Heart right ventricle (tissue), 16 donors: ENCODE measurements at regions of chr10 and their contacts with region 1.

Region 1: GRCh38 chr10:71974489-71975021 is 10.4 kb downstream of the CHST3 start:
- DNase-seq: no peak
- ATAC-seq: peak in 5 of 8 donors; percentile 1 to 51 (median 16)
- H3K4me3 ChIP-seq: no peak overlapping the region
- H3K27ac ChIP-seq: peak overlapping the region; percentile 7 to 92 (median 77)
- H3K4me1 ChIP-seq: peaks cover 42 to 100% (median 93%) of the 10 kb centered on the region in 9 donors
- H3K27me3 ChIP-seq: no peaks in the 10 kb centered on the region
- CTCF ChIP-seq: no peak

Region 2: GRCh38 chr10:72016608-72017312 is 42.2 kb after region 1 on chr10:
- intact Hi-C with region 1: loop called in 2 of 10 experiments (anchors 5 kb)
- DNase-seq: peak; percentile 31 to 74
- ATAC-seq: peak; percentile 28 to 58 (median 53)
- H3K4me3 ChIP-seq: no peak overlapping the region
- H3K27ac ChIP-seq: peak overlapping the region; percentile 56 to 84 (median 78)
- H3K4me1 ChIP-seq: peaks cover 31 to 76% (median 49%) of the 10 kb centered on the region in 9 donors
- H3K27me3 ChIP-seq: no peaks in the 10 kb centered on the region
- CTCF ChIP-seq: no peak

Region 3: GRCh38 chr10:72030762-72031543 is 56.4 kb after region 1 on chr10:
- intact Hi-C with region 1: loop called in 2 of 10 experiments (anchors 5 kb)
- DNase-seq: peak; percentile 49 to 68
- ATAC-seq: peak; percentile 59 to 95 (median 88)
- H3K4me3 ChIP-seq: no peak overlapping the region
- H3K27ac ChIP-seq: peak overlapping the region in 9 of 10 donors; percentile 15 to 73 (median 55)
- H3K4me1 ChIP-seq: peaks cover 6 to 43% (median 18%) of the 10 kb centered on the region in 9 donors
- H3K27me3 ChIP-seq: no peaks in the 10 kb centered on the region
- CTCF ChIP-seq: no peak

Region 4: GRCh38 chr10:72126184-72126871 is 151.8 kb after region 1 on chr10:
- intact Hi-C with region 1: no loop called
- DNase-seq: no peak
- ATAC-seq: peak in 3 of 8 donors; percentile 22 to 41 (median 32)
- H3K4me3 ChIP-seq: no peak overlapping the region
- H3K27ac ChIP-seq: peak overlapping the region in 1 of 10 donors; percentile 1
- H3K4me1 ChIP-seq: peaks cover 0 to 25% (median 6%) of the 10 kb centered on the region in 9 donors
- H3K27me3 ChIP-seq: no peaks in the 10 kb centered on the region
- CTCF ChIP-seq: peak; percentile 7 to 57 (median 38)

Region 5: DNA sequence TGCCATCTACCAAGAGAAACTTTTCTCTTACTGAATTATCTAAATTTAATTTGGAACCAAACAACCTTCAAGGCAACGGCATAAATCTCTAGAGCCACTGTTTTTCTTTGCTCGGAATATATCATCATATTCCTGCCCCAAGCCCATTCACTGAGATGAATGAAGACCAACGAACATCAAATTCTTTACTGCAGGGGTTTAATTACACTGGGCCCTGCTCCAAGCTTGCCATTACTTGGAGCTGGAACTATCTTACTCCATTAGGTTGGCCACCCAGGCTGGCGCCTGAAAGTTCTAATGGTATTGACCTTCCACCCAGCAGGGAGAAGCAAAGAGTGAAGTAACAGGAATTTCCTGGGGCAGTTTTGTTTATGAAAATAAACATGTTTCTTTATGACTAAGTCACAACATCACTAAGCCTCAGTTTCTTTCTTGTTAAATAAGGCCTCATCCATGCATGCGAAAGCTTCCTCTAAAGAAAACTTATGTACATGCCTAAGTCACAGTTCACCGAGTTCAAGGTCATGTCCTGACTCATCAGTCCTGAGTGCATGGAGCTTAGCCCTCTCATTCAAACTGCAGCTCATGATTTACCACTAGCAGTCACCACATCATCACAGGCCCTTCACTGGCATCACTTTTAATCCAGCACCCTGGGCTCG is 199.2 kb after region 1 on chr10:
- intact Hi-C with region 1: no loop called
- DNase-seq: no peak
- ATAC-seq: peak in 2 of 8 donors; percentile 12 to 29
- H3K4me3 ChIP-seq: no peak overlapping the region
- H3K27ac ChIP-seq: peak overlapping the region; percentile 11 to 73 (median 60)
- H3K4me1 ChIP-seq: peaks cover 2 to 46% (median 21%) of the 10 kb centered on the region in 9 donors
- H3K27me3 ChIP-seq: no peaks in the 10 kb centered on the region
- CTCF ChIP-seq: no peak

Region 6: DNA sequence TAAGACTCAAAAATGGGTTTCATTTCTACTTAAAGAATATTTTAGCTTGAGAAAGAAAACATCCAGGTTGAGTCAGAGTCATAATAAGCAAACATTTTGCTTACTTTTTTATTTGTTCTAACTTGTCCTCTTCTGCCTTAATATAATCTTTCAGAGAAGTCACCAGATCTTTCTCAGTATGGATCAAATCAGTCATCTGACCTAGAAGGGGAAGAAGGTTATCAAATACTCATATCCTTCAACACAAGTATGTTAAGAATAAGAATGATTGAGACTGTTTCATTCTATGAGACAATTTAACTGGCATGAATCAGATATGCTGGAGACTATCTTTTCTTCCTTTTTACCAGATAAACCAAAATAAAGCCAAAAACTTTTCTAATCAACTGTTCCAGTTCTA is 1099.1 kb after region 1 on chr10:
- intact Hi-C with region 1: no loop called
- DNase-seq: no peak
- ATAC-seq: no peak
- H3K4me3 ChIP-seq: no peak overlapping the region
- H3K27ac ChIP-seq: no peak overlapping the region
- H3K4me1 ChIP-seq: peaks cover 0 to 31% (median 21%) of the 10 kb centered on the region in 9 donors
- H3K27me3 ChIP-seq: no peaks in the 10 kb centered on the region
- CTCF ChIP-seq: no peak